ENCODE measurements at regions of chr22 and their contacts with region 1.

Region 1: DNA sequence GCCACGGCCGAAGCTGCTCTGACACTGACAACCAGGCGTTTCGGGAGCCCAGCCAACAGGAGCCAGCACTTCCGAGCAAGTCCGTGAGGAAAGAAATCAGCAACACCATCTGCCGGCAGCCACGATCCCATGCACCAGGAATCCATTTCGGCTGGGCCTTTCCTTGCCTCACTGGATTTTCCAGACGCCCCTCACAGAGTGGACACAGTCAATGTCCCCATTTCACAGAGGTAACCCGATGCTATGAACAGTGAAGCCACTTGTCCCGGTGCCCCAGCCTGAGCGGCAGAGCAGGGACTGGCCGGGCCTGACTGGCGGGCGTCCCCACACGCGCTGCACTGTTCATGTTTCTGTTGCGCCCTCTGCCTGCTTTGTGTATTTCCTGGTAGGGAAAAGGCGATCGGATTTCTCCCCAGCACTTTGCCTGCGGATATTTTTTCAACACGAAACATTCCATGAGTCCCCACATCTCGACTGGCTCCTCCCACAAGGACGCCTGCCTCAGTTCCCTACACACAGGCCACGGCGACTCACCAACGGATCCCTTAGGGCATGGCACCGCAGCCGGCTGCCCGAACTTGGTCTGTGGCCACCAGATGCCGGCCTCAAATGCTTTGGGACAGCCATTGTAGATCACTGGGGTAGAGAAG is 55.3 kb downstream of the TRMU start:
- DNase-seq: peak; percentile 90 to 93 (median 91)
- ATAC-seq: peak; percentile 94
- H3K4me3 ChIP-seq: no peak overlapping the region
- H3K27ac ChIP-seq: peak overlapping the region; percentile 55 to 82 (median 79)
- H3K4me1 ChIP-seq: peaks cover 11% of the 10 kb centered on the region
- H3K27me3 ChIP-seq: no peaks in the 10 kb centered on the region
- CTCF ChIP-seq: peak; percentile 53 to 98 (median 67)
- POLR2A ChIP-seq: peak in 2 of 3 donors; percentile 25 to 49

Region 2: DNA sequence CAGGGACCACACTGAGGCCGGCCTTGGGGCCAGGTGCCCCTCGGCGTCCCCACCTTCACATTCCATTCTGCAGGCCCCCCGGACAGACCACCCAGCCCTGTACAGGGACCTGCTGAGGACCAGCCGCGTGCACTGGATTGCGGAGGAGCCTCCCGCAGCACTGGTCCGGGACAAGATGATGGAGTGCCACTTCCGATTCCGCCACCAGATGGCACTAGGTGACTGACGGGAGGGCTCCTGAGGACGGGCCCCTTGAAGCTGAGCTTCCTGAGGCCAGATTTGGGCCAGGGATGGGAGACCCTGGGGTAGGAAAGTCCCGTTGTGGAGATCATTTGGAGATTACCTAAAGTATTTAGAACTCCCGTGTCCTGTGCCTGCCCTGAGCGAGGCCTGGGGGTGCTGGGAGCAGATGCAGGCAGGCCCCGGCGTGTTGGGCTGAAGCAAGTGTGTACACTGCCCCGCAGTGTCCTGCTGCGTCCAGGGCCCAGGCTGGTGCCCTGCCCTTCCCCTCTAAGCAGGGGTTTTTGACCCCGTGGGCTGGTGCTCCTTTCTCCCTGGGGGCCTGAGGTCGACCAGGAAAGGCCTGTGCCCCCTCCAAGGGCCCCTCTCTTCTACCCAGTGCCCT is 35.3 kb before region 1 on chr22:
- intact Hi-C with region 1: loop called (anchors 5 kb)
- DNase-seq: peak; percentile 65 to 81 (median 77)
- ATAC-seq: peak; percentile 40
- H3K4me3 ChIP-seq: no peak overlapping the region
- H3K27ac ChIP-seq: no peak overlapping the region
- H3K4me1 ChIP-seq: peaks cover 42% of the 10 kb centered on the region
- H3K27me3 ChIP-seq: no peaks in the 10 kb centered on the region
- CTCF ChIP-seq: peak; percentile 54 to 82 (median 65)
- POLR2A ChIP-seq: no peak

Region 3: DNA sequence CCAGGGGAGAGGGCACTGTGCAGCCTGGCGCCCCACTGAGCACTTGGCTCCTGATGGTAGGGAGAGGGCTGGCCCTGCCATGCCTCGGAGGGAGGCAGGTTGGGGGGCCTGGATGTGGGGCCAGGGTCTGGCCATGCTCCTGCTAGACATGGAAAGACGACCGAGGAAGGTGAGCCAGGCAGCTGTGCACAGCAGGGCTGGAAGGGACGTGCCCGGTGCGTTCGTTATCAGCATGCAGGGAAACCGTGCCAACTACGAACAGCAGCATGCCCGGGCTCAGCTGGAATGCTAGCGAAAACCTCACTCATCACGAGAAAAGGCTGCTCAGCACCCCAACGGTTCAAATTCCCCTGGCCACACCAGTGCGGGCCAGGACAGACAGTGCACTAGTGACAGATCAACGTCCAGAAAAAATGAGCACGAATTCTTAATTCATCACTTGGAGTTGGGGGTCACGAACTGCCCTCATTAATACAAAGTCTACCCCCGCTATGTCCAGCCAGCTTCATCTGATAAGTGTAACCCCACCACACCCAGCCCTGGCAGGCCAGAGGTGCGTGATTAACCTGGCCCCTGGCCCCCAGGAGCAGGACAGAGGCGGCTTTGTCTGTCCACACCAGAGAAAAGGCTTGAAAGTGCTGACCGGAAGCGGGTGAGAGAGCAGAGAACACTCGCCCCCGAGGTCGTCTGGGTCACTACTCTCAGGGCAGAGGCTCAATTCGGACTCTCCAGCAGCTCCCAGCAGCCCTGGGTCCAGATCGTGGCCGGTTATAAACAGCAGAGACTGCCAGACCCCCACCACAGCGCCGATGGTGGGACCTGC is 62.4 kb after region 1 on chr22:
- intact Hi-C with region 1: no loop called
- DNase-seq: peak; percentile 20 to 58 (median 40)
- ATAC-seq: peak; percentile 56
- H3K4me3 ChIP-seq: no peak overlapping the region
- H3K27ac ChIP-seq: no peak overlapping the region
- H3K4me1 ChIP-seq: peaks cover 7% of the 10 kb centered on the region
- H3K27me3 ChIP-seq: no peaks in the 10 kb centered on the region
- CTCF ChIP-seq: no peak
- POLR2A ChIP-seq: no peak

Region 4: GRCh38 chr22:46619830-46620501 is 229.2 kb after region 1 on chr22 and contains the start of gene GRAMD4:
- intact Hi-C with region 1: no loop called
- DNase-seq: peak in 1 of 4 donors; percentile 58
- ATAC-seq: peak; percentile 39
- H3K4me3 ChIP-seq: no peak within 1 kb of the TSS
- H3K27ac ChIP-seq: peak within 1 kb of the TSS in 2 of 4 donors; percentile 25 to 62
- H3K4me1 ChIP-seq: peaks cover 22% of the 10 kb centered on the region
- H3K27me3 ChIP-seq: no peaks in the 10 kb centered on the region
- CTCF ChIP-seq: no peak
- POLR2A ChIP-seq: no peak
- total RNA-seq, gene GRAMD4: 29.3 to 62.3 TPM

Measured in body of pancreas (tissue), 4 donors.